ENCODE measurements at regions of chr17 and their contacts with region 1.

Region 1: DNA sequence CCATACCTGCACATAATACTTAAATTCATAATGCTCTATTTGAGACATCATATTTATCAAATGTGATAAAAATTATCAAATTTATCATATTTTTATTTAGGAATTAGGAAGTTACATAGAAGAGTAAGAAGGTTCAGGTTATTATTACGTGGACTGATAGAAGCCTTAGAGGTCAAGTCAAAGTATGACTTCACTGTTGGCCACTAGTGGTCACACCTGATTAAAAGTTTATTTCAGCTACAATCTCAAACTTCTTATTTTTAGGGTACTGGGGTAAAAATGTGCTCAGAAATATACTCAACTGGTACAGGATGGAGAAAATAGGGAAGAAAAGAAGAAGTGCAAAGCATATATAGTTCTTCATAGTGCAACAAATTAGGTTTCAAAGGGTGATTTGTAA is 5.8 kb upstream of the STRADA start:
- DNase-seq: no peak
- H3K4me3 ChIP-seq: no peak overlapping the region
- CTCF ChIP-seq: no peak

Region 2: DNA sequence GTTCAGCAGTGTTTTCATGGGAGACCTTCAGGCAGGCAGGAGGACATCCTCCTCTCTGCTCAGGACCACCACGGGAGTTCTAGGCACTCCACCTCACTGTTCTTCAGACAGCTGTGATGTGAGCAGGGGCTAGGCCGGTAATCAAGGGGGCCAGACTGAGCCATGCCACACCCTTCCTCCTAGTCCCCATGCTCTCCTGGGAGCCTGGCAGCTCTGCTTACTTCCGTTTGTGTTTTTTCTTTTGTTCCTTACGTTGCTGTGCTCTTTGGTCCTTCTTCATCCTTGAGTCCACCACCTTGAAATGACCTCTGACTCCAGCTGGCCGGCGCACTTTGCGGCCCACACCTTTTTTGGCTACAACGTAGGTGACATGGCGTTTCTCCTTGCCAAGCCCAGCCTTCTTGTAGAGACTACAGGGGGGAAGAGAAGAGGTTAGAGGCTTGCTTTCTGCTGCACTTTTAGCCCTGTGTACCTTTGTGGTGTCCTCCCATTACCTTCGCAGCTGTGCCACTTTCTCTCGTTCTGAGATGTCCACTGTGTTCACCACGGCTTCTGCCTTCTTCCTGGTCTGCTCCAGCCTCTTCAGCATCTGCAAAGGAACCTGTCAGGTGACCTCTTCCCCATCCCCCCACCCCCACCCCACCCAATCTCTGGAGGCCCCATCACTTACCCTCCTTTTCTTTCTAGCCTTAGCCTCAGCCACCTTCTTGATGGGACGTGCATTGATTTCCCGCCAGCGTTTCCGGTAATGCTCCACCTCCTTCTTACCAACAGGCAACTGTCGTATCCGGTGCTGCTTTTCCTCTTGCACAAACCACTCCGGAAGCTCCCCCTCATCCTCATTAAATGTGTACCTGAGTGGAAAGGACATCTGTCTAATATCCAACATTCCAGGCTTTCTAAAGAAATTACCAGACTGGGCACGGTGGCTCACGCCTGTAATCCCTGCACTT is 72.4 kb after region 1 on chr17:
- in situ Hi-C with region 1: loop called (anchors 5 kb)
- DNase-seq: no peak
- H3K4me3 ChIP-seq: no peak overlapping the region
- CTCF ChIP-seq: no peak

Region 3: DNA sequence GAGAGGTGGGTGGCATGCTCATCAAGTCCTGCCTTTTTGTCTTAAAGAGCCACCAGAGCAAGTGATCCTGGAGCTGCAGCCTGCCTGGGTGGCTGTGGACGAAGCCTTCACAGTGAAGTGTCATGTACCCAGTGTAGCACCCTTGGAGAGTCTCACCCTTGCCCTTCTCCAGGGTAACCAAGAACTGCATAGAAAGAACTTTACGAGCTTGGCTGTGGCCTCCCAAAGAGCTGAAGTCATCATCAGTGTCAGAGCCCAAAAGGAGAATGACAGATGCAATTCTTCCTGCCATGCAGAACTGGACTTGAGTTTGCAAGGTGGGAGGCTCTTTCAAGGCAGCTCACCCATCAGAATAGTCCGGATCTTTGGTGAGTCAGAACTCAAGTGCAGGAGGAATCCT is 111.8 kb after region 1 on chr17:
- in situ Hi-C with region 1: no loop called
- DNase-seq: no peak
- H3K4me3 ChIP-seq: no peak overlapping the region
- CTCF ChIP-seq: no peak